GM23248 (cell line): ENCODE measurements at regions of chr6 and their contacts with region 1.

Region 1: DNA sequence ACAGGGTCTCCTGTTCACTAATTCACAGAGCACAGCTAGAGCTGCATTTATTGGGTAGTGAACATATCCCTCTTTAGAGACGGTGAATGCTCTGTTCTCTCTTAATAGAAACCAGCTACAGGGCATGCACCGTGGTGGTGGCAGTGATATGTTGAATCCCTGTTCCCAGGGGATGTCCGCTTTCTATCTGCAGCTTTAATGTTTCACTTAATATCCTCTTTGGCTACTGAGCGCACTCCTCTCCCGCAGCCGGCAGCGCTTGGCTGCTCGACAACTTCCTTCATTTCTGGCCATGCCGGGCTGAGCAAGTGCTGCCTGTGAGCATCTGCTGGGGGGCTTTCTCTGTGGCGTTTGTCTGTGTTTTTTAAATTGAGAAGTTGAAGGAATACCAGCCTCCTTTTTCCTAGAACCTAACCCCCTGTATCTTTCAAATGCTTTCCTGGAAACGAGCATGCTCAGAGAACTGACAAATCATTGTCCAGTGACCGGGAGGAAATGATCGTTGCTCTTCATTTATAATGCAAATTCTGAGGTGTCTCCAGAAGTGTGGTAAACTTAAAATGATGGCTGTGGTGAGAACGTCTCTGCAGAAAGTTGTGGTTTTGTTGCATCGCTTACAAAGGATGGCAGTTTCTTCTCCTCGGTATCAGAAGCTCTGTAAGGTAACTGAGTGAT is 297.9 kb downstream of the UTRN start:
- DNase-seq: peak; percentile 59
- H3K4me3 ChIP-seq: peak overlapping the region; percentile 61
- H3K27ac ChIP-seq: no peak overlapping the region
- H3K4me1 ChIP-seq: peaks cover 39% of the 10 kb centered on the region
- H3K27me3 ChIP-seq: no peaks in the 10 kb centered on the region

Region 2: GRCh38 chr6:144234399-144234798 is 348.7 kb before region 1 on chr6:
- in situ Hi-C with region 1: no loop called
- DNase-seq: no peak
- H3K4me3 ChIP-seq: no peak overlapping the region
- H3K27ac ChIP-seq: no peak overlapping the region
- H3K4me1 ChIP-seq: no peaks in the 10 kb centered on the region
- H3K27me3 ChIP-seq: no peaks in the 10 kb centered on the region

Region 3: GRCh38 chr6:145633981-145634627 is 1051.0 kb after region 1 on chr6:
- in situ Hi-C with region 1: loop called (anchors 25 kb)
- DNase-seq: peak; percentile 80
- H3K4me3 ChIP-seq: no peak overlapping the region
- H3K27ac ChIP-seq: no peak overlapping the region
- H3K4me1 ChIP-seq: no peaks in the 10 kb centered on the region
- H3K27me3 ChIP-seq: no peaks in the 10 kb centered on the region